Activated CD8-positive, alpha-beta T cell treated with anti-CD3 and anti-CD28 coated beads, Interleukin-2, amount 10 ng/mL, durations not matched to agents 7 days and 5 days (primary cell): ENCODE measurements at regions of chr1 and their contacts with region 1.

Region 1: GRCh38 chr1:167542109-167543032 is 11.2 kb downstream of the CREG1 start:
- DNase-seq: no peak
- ATAC-seq: peak; percentile 60
- H3K4me3 Mint-ChIP-seq: no peak overlapping the region
- H3K27ac Mint-ChIP-seq: peak overlapping the region; percentile 14
- H3K4me1 Mint-ChIP-seq: peaks cover 51% of the 10 kb centered on the region
- H3K27me3 Mint-ChIP-seq: no peaks in the 10 kb centered on the region

Region 2: DNA sequence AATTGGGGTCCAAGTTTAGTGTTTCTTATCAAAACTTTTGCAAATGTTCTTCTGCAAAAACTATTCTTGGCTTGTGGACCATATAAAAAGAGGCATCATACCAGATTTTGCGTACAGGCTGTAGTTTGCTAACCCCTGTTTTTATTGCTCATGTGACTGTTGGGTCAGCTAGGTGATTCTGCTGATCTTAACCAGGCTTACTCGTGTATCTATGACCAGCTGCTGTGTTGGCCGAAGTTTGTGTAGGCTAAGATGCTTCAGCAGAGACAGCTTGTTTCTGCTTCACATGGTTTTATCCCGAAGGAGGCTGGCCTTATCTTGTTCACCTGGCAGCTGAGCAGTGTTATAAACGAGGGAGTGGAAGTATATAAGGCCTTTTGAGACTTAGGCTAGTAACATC is 283.5 kb before region 1 on chr1:
- CTCF ChIA-PET with region 1: interaction called, 11 read pairs
- POLR2A ChIA-PET with region 1: no interaction called
- DNase-seq: no peak
- ATAC-seq: no peak
- H3K4me3 Mint-ChIP-seq: no peak overlapping the region
- H3K27ac Mint-ChIP-seq: no peak overlapping the region
- H3K4me1 Mint-ChIP-seq: peaks cover 8% of the 10 kb centered on the region
- H3K27me3 Mint-ChIP-seq: no peaks in the 10 kb centered on the region

Region 3: GRCh38 chr1:167342846-167343245 is 199.5 kb before region 1 on chr1:
- CTCF ChIA-PET with region 1: no interaction called
- POLR2A ChIA-PET with region 1: no interaction called
- DNase-seq: no peak
- ATAC-seq: peak; percentile 33
- H3K4me3 Mint-ChIP-seq: no peak overlapping the region
- H3K27ac Mint-ChIP-seq: no peak overlapping the region
- H3K4me1 Mint-ChIP-seq: peaks cover 3% of the 10 kb centered on the region
- H3K27me3 Mint-ChIP-seq: no peaks in the 10 kb centered on the region

Region 4: GRCh38 chr1:167401260-167401873 is 141.0 kb before region 1 on chr1:
- CTCF ChIA-PET with region 1: interaction called, 20 read pairs
- POLR2A ChIA-PET with region 1: no interaction called
- DNase-seq: peak; percentile 73
- ATAC-seq: peak; percentile 91
- H3K4me3 Mint-ChIP-seq: no peak overlapping the region
- H3K27ac Mint-ChIP-seq: no peak overlapping the region
- H3K4me1 Mint-ChIP-seq: peaks cover 8% of the 10 kb centered on the region
- H3K27me3 Mint-ChIP-seq: no peaks in the 10 kb centered on the region

Region 5: DNA sequence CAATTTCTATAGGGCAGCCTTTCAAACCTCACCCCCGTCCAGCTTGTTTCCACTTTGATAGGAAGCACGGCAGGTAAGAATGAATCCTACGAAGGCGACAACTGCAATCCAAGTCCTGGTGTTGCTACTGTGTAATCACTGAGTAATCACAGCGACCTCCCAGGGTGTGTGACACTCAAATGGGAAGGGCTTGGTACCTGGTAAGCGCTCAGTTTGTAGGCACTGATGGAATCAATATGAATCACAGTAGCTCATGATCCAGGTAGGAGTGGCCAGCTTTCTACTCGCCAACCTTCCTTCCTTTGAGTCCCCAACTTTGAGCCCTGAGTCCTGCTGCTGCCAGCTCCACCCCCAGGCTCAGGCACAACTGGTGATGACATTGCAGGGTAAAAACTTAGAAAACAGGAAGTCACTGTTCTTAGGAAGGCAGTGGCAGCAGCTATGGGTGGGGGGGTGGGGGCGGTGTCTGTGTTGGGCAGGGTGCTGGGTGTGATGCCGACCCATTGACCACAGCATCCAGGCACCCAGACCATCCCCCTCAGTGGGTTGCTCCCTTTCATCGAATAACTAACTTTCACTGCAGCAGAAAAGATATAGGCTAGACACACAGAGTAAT is 94.7 kb before region 1 on chr1:
- CTCF ChIA-PET with region 1: interaction called, 26 read pairs
- POLR2A ChIA-PET with region 1: no interaction called
- DNase-seq: peak; percentile 83
- ATAC-seq: peak; percentile 75
- H3K4me3 Mint-ChIP-seq: peak overlapping the region; percentile 67
- H3K27ac Mint-ChIP-seq: peak overlapping the region; percentile 94
- H3K4me1 Mint-ChIP-seq: peaks cover 91% of the 10 kb centered on the region
- H3K27me3 Mint-ChIP-seq: no peaks in the 10 kb centered on the region

Region 6: GRCh38 chr1:167517535-167518330 is 24.6 kb before region 1 on chr1:
- CTCF ChIA-PET with region 1: interaction called, 41 read pairs
- POLR2A ChIA-PET with region 1: no interaction called
- DNase-seq: peak; percentile 85
- ATAC-seq: peak; percentile 81
- H3K4me3 Mint-ChIP-seq: peak overlapping the region; percentile 93
- H3K27ac Mint-ChIP-seq: peak overlapping the region; percentile 98
- H3K4me1 Mint-ChIP-seq: peaks cover 50% of the 10 kb centered on the region
- H3K27me3 Mint-ChIP-seq: no peaks in the 10 kb centered on the region

Region 7: DNA sequence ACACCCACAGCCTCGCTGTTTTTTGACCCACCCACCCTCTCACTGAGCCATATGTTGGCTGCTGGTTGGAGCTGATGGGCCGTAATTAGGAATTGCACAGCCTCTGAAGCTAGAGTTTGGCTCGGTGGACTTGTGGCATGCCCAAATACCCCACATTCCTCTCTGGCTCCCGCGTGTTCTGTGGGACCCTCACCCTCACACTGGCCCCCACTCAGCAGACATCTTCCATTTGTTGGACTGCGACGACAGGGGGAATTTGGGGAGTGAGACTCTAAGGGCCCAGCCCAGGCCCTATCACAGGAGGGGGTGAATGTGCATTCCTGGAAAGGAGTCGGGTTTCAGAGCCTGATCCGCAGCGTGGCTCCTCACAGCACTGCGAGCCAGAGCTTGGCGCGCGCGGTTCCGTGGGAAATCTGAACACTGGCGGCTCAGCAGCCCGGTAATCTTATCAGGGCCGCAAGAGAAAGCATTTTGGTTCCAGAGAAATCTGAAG is 92.8 kb after region 1 on chr1:
- CTCF ChIA-PET with region 1: interaction called, 15 read pairs
- POLR2A ChIA-PET with region 1: no interaction called
- DNase-seq: no peak
- ATAC-seq: no peak
- H3K4me3 Mint-ChIP-seq: no peak overlapping the region
- H3K27ac Mint-ChIP-seq: no peak overlapping the region
- H3K4me1 Mint-ChIP-seq: peaks cover 80% of the 10 kb centered on the region
- H3K27me3 Mint-ChIP-seq: no peaks in the 10 kb centered on the region